Natural killer cell (primary cell): ENCODE measurements at regions of chr3 and their contacts with region 1.

Region 1: DNA sequence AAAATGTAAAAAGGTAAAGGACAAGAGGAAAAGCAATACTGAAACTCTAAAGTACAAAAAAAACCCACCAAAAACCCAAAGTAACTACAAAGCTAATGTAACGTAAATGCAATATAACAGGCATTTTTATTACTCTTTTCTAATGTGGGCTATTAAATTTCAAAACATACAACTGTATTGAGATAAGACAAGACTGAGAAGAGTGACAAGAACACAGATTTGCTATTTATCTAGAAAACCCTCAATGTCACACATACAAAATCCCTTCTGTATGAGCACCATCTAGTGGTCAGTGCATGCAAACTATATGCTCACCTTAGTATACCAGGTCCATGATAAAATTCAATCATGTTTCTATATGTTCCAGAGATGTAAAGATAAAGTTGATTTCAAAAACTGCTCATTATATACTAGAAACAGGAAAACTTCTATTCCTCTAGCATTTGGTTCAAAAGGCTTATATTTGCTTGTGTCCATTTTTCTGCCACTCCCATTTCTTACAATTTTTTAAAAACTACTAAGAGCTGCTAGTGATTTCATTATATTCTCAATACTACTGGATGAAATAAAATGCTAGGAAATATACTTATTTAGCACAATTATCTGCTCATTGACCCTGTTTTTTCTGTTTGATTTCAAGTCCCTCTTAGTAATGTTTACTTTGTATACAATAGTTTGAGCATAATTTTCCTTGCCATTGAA is 111.4 kb downstream of the DLG1 start:
- DNase-seq: peak in 1 of 2 donors; percentile 76
- ATAC-seq: peak; percentile 79 to 87 (median 83)
- H3K4me3 ChIP-seq: no peak overlapping the region
- H3K4me3 Mint-ChIP-seq: no peak overlapping the region
- H3K27ac ChIP-seq: no peak overlapping the region
- H3K27ac Mint-ChIP-seq: no peak overlapping the region
- H3K4me1 ChIP-seq: no peaks in the 10 kb centered on the region
- H3K4me1 Mint-ChIP-seq: peaks cover 0 to 13% of the 10 kb centered on the region in 2 donors
- H3K27me3 ChIP-seq: no peaks in the 10 kb centered on the region
- H3K27me3 Mint-ChIP-seq: no peaks in the 10 kb centered on the region
- CTCF ChIP-seq: peak; percentile 74

Region 2: DNA sequence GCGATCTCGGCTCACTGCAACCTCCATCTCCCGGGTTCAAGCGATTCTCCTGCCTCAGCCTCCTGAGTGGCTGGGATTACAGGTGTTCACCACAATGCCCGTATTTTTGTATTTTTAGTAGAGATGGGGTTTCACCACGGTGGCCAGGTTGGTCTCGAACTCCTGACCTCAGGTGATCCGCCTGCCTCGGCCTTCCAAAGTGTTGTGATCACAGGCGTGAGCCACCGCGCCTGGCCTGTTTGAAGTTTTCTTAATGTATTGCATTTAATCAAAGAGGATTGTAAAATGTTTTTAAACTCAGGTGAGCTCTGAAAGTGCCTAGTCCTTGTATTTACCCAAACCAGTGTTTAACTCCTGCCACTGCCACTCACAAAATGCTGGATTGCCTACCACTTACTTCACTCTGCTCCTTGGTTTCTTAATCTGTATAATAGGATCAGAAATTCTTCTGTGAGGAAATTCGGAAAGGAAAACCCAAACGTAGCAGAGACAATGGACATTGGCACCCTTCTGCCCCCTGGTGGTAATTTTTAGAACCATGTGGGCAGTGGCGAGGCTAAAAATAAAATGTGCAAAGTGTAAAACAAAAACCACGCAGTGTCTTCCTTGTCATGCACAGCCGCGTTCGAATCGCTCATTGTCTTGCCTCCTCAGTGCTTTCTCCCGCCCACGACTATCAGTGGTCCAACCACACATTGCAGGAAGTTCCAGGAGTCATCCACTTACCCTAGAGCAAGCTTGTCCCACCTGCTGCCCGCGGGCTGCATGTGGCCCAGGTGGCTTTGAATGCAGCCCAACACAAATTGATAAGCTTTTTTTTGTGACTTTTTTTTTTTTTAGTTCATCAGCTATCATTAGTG is 502.3 kb before region 1 on chr3:
- intact Hi-C with region 1: no loop called
- DNase-seq: peak; percentile 54 to 87
- ATAC-seq: peak; percentile 85 to 94 (median 91)
- H3K4me3 ChIP-seq: no peak overlapping the region
- H3K4me3 Mint-ChIP-seq: peak overlapping the region; percentile 80
- H3K27ac ChIP-seq: no peak overlapping the region
- H3K27ac Mint-ChIP-seq: peak overlapping the region; percentile 45 to 79
- H3K4me1 ChIP-seq: peaks cover 16% of the 10 kb centered on the region
- H3K4me1 Mint-ChIP-seq: peaks cover 16 to 17% of the 10 kb centered on the region in 2 donors
- H3K27me3 ChIP-seq: no peaks in the 10 kb centered on the region
- H3K27me3 Mint-ChIP-seq: no peaks in the 10 kb centered on the region
- CTCF ChIP-seq: peak; percentile 95

Region 3: DNA sequence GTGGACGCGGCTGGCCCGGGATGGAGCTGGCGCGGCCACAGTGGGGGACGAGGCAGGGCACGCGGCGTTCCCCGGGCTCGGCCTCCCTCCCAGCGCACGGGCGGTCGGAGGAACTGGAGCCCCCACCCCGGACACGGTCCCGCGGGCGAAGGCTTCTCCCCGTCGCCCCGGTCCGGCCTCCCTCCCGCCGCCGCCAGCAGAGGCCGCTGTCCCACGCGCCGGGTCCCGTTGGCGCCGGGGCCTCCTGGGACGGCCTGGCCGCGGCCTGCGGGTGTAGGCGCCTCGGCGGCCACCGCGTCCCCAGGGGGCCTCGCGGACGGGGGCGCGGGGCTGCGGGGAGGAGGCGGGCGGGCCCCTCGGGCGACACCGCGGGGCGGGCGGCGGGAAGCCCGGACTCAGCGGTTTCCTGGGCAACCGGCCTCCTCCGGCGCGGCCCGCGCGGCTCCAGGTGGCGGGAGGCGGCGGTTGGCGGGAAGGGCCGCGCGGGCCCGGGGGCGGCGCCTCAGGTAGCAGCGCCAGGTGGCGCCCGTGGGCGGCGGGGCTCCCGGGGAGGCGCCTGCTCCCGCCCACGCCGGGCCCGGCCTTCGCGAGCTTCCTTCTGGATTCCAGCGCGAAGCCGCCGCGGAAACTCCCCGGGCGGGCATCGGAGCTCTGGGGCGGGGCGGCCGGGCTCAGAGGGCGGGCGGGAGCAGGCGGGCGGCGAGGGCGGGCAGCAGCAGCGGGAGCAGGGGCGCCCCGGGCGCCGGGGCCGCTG is 184.2 kb before region 1 on chr3:
- intact Hi-C with region 1: loop called (anchors 1 kb)
- DNase-seq: peak; percentile 80 to 92
- ATAC-seq: peak; percentile 85 to 90 (median 85)
- H3K4me3 ChIP-seq: no peak overlapping the region
- H3K4me3 Mint-ChIP-seq: no peak overlapping the region
- H3K27ac ChIP-seq: no peak overlapping the region
- H3K27ac Mint-ChIP-seq: peak overlapping the region in 1 of 2 donors; percentile 85
- H3K4me1 ChIP-seq: peaks cover 13% of the 10 kb centered on the region
- H3K4me1 Mint-ChIP-seq: peaks cover 0 to 14% of the 10 kb centered on the region in 2 donors
- H3K27me3 ChIP-seq: no peaks in the 10 kb centered on the region
- H3K27me3 Mint-ChIP-seq: peaks cover 0 to 7% of the 10 kb centered on the region in 2 donors
- CTCF ChIP-seq: peak; percentile 73